Mucosa of descending colon (tissue), 3 donors: ENCODE measurements at regions of chr2 and their contacts with region 1.

Region 1: GRCh38 chr2:169839954-169840746 is 12.9 kb downstream of the UBR3 start:
- DNase-seq: no peak
- ATAC-seq: peak; percentile 63
- H3K4me3 ChIP-seq: no peak overlapping the region
- H3K4me1 ChIP-seq: peaks cover 3% of the 10 kb centered on the region
- CTCF ChIP-seq: no peak

Region 2: GRCh38 chr2:169928463-169928864 is 88.3 kb after region 1 on chr2:
- intact Hi-C with region 1: loop called in 1 of 2 experiments (anchors 10 kb)
- DNase-seq: peak in 1 of 3 donors; percentile 24
- ATAC-seq: peak; percentile 43
- H3K4me3 ChIP-seq: no peak overlapping the region
- H3K4me1 ChIP-seq: no peaks in the 10 kb centered on the region
- CTCF ChIP-seq: peak; percentile 31